Right lobe of liver (tissue), 6 donors: ENCODE measurements at regions of chr6 and their contacts with region 1.

Region 1: GRCh38 chr6:53725791-53726431 is 60.4 kb upstream of the KLHL31 start:
- DNase-seq: peak; percentile 75 to 82 (median 78)
- ATAC-seq: peak; percentile 97 to 99 (median 98)
- H3K4me3 ChIP-seq: no peak overlapping the region
- H3K27ac ChIP-seq: no peak overlapping the region
- H3K4me1 ChIP-seq: peaks cover 0 to 3% (median 0%) of the 10 kb centered on the region in 4 donors
- H3K27me3 ChIP-seq: no peaks in the 10 kb centered on the region
- CTCF ChIP-seq: peak; percentile 82 to 96 (median 94)
- POLR2A ChIP-seq: no peak

Region 2: DNA sequence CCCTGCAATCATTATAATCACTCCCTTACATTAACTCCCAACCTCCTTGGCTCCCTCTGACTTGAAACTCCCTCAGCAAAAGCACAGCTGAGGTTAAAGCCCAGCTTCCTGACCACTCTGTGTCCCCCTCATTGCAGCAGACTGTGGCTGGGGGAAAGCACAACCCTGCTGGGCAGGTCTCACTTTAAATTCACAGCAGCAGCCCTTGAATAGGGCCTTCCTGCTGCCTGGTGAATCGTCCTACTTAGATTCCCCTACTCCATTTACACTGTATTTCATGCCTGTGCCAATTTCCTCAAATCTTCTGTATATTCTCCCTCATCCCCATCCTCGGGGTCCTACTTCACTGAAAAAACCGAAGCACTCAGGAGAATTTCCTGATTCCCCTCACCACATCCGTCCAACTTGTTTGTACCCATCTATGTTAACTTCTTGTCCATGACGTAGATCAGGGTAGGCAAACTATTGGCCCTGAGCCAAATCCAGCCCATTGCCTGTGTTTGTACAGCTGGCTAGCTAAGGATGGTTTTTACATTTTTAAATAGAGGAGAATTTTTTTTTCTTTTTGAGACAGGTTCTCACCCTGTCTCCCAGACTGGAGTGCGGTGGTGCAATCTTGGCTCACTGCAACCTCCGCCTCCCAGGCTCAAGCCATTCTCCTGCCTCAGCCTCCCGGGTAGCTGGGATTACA is 545.8 kb before region 1 on chr6:
- intact Hi-C with region 1: no loop called
- DNase-seq: peak; percentile 47 to 56 (median 54)
- ATAC-seq: peak; percentile 52 to 75 (median 63)
- H3K4me3 ChIP-seq: no peak overlapping the region
- H3K27ac ChIP-seq: no peak overlapping the region
- H3K4me1 ChIP-seq: peaks cover 0 to 4% (median 0%) of the 10 kb centered on the region in 4 donors
- H3K27me3 ChIP-seq: no peaks in the 10 kb centered on the region
- CTCF ChIP-seq: no peak
- POLR2A ChIP-seq: no peak

Region 3: DNA sequence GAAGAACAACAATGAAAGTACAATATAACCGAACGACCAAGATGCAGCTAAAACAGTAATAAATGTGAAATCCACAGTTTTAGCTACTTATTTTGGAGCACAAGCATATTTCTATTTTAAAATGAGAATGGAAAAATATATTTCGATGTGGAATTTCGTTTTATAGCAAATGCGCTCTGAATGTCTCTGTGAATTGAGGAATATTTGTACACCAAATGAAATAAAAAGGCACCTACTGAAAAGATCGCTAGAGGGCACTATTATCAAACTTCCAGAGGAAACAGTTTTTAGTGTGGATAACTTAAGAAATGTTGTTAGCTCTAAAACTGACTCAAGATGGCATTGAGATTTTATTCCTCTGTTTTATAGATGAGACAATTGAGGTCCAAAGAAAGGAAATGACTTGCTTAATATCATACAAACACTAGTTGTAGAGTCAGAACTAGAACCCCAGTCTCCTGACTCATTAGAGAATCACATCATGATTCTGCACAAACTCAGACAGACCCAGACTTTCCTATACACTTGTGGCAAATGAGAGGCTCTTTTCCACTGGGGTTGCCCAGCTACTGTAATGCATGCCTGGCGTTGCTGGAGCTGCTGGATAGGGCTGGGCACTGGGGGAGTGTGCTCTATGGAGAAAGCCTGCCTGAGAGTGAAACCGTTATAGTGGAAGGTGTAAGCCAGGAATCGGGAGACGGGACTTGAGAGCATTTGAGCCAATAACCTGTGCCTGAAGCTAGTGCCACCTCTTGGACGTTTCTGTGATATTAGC is 232.9 kb before region 1 on chr6:
- intact Hi-C with region 1: loop called in 1 of 2 experiments (anchors 10 kb)
- DNase-seq: peak in 1 of 3 donors; percentile 22
- ATAC-seq: peak; percentile 73 to 94 (median 89)
- H3K4me3 ChIP-seq: peak overlapping the region in 2 of 3 donors; percentile 28 to 29
- H3K27ac ChIP-seq: peak overlapping the region in 2 of 3 donors; percentile 30 to 52
- H3K4me1 ChIP-seq: peaks cover 0 to 9% (median 0%) of the 10 kb centered on the region in 4 donors
- H3K27me3 ChIP-seq: no peaks in the 10 kb centered on the region
- CTCF ChIP-seq: peak; percentile 67 to 76 (median 70)
- POLR2A ChIP-seq: no peak

Region 4: DNA sequence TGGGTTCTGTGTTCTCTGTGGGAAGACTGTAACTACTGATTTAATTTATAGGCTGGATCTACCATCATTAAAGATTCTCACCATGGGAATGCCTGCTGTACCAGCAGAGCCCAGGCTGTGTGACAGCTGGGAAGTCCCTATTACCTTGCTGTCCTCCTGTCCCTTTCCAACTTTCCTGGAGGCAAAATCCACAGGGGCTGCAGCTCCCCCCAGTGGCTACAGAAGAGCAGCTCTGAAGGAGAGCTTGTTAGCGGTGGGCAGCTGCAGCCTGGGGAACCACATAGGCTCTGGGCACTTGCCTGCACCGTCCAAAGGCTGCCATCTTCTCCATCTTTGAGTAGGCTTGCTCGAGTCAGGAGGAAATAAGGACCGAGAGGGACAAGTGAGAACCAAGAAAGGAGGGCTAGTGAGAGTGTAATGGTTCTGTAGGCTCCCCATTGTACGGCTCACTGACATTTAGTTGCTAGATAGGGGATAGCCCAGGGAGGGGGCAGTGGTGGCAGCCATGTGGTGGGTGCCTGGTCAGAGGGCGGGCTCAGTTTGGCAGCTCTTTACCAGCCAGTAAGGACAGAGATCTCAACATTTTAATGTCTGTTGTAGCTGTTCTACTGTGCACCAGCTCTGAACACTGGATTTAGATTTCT is 230.3 kb after region 1 on chr6:
- intact Hi-C with region 1: loop called in 1 of 2 experiments (anchors 10 kb)
- DNase-seq: peak in 2 of 3 donors; percentile 63 to 71
- ATAC-seq: peak; percentile 70 to 100 (median 74)
- H3K4me3 ChIP-seq: no peak overlapping the region
- H3K27ac ChIP-seq: no peak overlapping the region
- H3K4me1 ChIP-seq: no peaks in the 10 kb centered on the region
- H3K27me3 ChIP-seq: no peaks in the 10 kb centered on the region
- CTCF ChIP-seq: peak; percentile 36 to 73 (median 54)
- POLR2A ChIP-seq: no peak